CD4-positive, alpha-beta memory T cell (primary cell): ENCODE measurements at regions of chr3 and their contacts with region 1.

Region 1: GRCh38 chr3:133927540-133928066 is 31.9 kb upstream of the RAB6B start:
- DNase-seq: peak; percentile 63 to 76 (median 75)
- H3K4me3 ChIP-seq: peak overlapping the region in 1 of 2 donors; percentile 36
- H3K4me3 Mint-ChIP-seq: peak overlapping the region; percentile 67 to 84 (median 79)
- H3K27ac ChIP-seq: no peak overlapping the region
- H3K27ac Mint-ChIP-seq: peak overlapping the region in 3 of 7 donors; percentile 11 to 74 (median 61)
- H3K4me1 ChIP-seq: peaks cover 12% of the 10 kb centered on the region
- H3K4me1 Mint-ChIP-seq: peaks cover 5 to 15% (median 9%) of the 10 kb centered on the region in 4 donors
- H3K27me3 ChIP-seq: no peaks in the 10 kb centered on the region
- H3K27me3 Mint-ChIP-seq: peaks cover 8% of the 10 kb centered on the region in 2 donors

Region 2: DNA sequence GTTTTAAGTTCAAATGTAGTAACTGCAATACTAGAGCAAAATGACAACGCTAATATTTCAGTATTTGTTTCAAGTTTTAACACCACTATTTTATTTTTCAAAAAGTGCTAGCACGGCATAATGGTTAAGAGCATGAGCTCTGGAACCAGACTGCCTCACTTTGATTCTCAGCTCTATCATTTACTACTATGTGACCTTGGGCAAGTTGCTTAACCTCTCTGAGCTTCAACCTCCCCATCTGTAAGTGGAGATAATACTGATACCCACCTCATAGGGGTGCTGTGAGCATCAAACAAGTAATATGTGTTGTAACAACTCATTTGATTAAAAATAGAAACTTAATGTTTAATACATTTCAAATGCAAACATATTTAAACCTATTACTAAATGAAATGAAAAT is 1090.0 kb before region 1 on chr3:
- CTCF ChIA-PET with region 1: no interaction called
- POLR2A ChIA-PET with region 1: no interaction called
- intact Hi-C with region 1: no loop called
- DNase-seq: no peak
- H3K4me3 ChIP-seq: no peak overlapping the region
- H3K4me3 Mint-ChIP-seq: no peak overlapping the region
- H3K27ac ChIP-seq: no peak overlapping the region
- H3K27ac Mint-ChIP-seq: no peak overlapping the region
- H3K4me1 ChIP-seq: no peaks in the 10 kb centered on the region
- H3K4me1 Mint-ChIP-seq: no peaks in the 10 kb centered on the region
- H3K27me3 ChIP-seq: no peaks in the 10 kb centered on the region
- H3K27me3 Mint-ChIP-seq: peaks cover 5 to 12% of the 10 kb centered on the region in 2 donors

Region 3: DNA sequence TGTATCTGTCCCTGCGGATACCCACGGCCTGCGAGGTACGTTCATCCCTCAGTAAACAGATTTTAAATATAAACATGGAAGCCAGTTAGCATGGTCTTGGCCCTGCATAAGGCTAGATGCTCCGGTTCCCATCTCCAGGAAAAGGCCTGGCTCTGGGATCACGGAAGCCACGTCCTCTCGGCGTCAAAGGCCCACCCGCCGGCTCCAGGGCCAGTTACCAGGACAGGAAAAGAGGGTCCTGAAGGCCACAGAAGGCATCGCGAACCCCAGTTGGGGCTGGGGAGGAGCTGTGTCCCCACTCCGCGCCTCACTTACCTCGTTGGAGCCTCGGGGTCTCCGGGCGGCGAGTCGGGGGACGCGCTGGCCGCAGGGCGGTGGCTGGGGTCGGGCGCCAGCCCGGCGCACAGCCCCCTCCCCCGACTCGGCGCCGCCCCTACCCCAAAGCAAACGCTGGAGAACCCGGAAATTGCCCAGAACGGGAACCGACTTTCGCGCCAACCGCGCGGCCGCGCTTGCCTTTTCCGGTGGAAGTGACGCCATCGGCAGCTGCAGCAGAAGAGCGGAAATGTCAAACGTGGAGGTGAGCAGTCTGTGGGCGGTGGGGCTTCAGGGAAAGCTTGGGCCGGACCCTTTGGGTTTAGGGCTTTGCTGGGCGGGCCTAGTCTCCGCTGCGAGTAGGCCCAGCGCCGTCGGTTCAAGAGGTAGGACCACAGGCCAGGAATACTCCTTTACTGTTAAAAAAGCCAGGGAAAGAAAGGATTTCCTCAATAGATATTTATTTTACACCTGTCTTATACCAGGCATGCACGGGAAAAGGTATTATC is 265.9 kb before region 1 on chr3 and contains the start of gene TOPBP1:
- CTCF ChIA-PET with region 1: no interaction called
- POLR2A ChIA-PET with region 1: no interaction called
- intact Hi-C with region 1: loop called (anchors 1 kb)
- DNase-seq: peak; percentile 81 to 90 (median 85)
- H3K4me3 ChIP-seq: peak within 1 kb of the TSS; percentile 78 to 99
- H3K4me3 Mint-ChIP-seq: peak within 1 kb of the TSS; percentile 98 to 99 (median 98)
- H3K27ac ChIP-seq: peak within 1 kb of the TSS; percentile 81
- H3K27ac Mint-ChIP-seq: peak within 1 kb of the TSS; percentile 98 to 99 (median 99)
- H3K4me1 ChIP-seq: peaks cover 32% of the 10 kb centered on the region
- H3K4me1 Mint-ChIP-seq: peaks cover 29 to 52% (median 40%) of the 10 kb centered on the region in 4 donors
- H3K27me3 ChIP-seq: no peaks in the 10 kb centered on the region
- H3K27me3 Mint-ChIP-seq: no peaks in the 10 kb centered on the region
- total RNA-seq, gene TOPBP1: 42.0 to 43.2 TPM

Region 4: DNA sequence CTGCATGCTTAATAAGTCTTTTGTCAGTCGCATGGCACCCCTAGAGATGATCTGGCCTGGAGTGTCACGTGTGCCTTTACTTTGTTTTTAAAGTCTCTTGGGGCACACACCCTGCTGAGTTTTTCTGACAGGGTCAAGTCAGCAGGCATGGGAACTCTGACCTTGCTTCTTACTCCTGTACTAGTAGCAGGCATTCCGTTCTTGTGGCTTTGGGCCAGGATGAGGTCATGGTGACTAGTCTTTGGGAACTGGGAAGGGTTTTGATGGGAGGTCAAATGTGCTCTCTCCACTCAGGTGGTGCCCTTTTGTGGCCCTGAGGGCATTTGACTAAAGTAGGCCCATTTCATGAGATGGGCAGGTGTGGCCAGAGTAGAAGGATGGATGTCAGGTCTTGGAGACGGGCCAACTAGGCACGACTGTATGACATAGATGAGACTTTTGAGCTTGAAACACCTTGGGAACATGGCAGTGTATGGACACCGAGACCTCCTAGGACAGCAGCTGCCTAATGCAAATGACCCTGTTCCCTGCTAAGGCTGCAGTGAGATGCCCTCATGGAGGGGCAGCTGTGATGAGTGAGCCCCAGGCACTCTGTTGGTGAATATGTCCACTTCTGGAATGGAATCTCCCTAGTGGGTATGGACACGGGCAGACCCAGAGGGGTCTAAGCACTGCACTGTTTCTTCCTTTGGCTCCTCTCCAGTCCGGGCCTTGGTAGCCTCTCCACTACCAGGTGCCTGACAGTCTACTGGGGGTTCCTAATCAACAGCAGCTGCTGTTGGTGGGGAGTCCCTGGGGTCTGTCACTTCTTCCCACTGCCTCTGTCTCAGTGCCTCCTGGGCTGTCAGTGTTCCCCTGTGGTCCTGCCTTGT is 105.6 kb before region 1 on chr3:
- CTCF ChIA-PET with region 1: interaction called, 11 read pairs
- POLR2A ChIA-PET with region 1: no interaction called
- intact Hi-C with region 1: loop called (anchors 1 kb)
- DNase-seq: no peak
- H3K4me3 ChIP-seq: no peak overlapping the region
- H3K4me3 Mint-ChIP-seq: no peak overlapping the region
- H3K27ac ChIP-seq: no peak overlapping the region
- H3K27ac Mint-ChIP-seq: peak overlapping the region in 3 of 7 donors; percentile 22 to 47 (median 32)
- H3K4me1 ChIP-seq: no peaks in the 10 kb centered on the region
- H3K4me1 Mint-ChIP-seq: peaks cover 0 to 4% (median 2%) of the 10 kb centered on the region in 4 donors
- H3K27me3 ChIP-seq: no peaks in the 10 kb centered on the region
- H3K27me3 Mint-ChIP-seq: no peaks in the 10 kb centered on the region

Region 5: GRCh38 chr3:133955892-133956291 is 28.3 kb after region 1 on chr3:
- CTCF ChIA-PET with region 1: no interaction called
- POLR2A ChIA-PET with region 1: no interaction called
- intact Hi-C with region 1: no loop called
- DNase-seq: no peak
- H3K4me3 ChIP-seq: no peak overlapping the region
- H3K4me3 Mint-ChIP-seq: no peak overlapping the region
- H3K27ac ChIP-seq: no peak overlapping the region
- H3K27ac Mint-ChIP-seq: no peak overlapping the region
- H3K4me1 ChIP-seq: no peaks in the 10 kb centered on the region
- H3K4me1 Mint-ChIP-seq: no peaks in the 10 kb centered on the region
- H3K27me3 ChIP-seq: no peaks in the 10 kb centered on the region
- H3K27me3 Mint-ChIP-seq: peaks cover 3 to 12% of the 10 kb centered on the region in 2 donors